AG04449 (cell line): ENCODE measurements at regions of chr16 and their contacts with region 1.

Region 1: GRCh38 chr16:87324411-87325275 is 7.5 kb upstream of the C16orf95 start:
- DNase-seq: no peak
- H3K4me3 ChIP-seq: no peak overlapping the region
- CTCF ChIP-seq: peak; percentile 81

Region 2: GRCh38 chr16:86874141-86874540 is 450.5 kb before region 1 on chr16:
- CTCF ChIA-PET with region 1: no interaction called
- POLR2A ChIA-PET with region 1: no interaction called
- DNase-seq: no peak
- H3K4me3 ChIP-seq: no peak overlapping the region
- CTCF ChIP-seq: peak; percentile 34

Region 3: DNA sequence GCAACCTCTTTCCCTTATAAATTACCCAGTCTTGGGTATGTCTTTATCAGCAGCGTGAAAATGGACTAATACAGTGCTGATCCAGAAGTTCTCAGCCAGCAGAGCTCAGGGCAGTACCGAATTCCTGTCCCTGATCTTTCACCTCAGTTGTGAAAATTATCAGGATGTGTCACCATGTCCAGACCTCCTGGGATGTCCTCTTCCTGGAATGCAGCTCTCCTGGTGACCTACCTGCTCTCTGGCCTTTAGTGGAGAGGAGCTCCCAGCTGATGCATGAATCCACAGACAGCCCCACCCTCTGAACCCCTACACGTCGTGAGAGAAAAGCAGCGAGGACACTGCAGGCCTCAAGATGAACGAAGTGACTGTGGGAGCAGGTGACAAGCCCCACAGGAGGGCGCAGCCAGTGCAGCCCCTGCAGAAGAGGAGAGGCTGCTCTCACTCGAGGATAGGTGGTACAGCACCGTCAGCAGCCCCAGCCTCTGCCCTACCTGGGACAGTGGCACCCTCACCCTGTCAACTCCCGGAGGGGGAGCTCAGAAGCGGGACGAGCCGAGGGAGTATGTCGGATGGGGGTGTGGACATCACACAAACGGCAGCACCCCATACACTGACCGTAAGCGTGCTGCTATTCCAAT is 14.6 kb after region 1 on chr16:
- CTCF ChIA-PET with region 1: interaction called, 29 read pairs
- POLR2A ChIA-PET with region 1: no interaction called
- DNase-seq: no peak
- H3K4me3 ChIP-seq: no peak overlapping the region
- CTCF ChIP-seq: no peak

Region 4: GRCh38 chr16:87344931-87345631 is 20.4 kb after region 1 on chr16:
- CTCF ChIA-PET with region 1: interaction called, 11 read pairs
- POLR2A ChIA-PET with region 1: no interaction called
- DNase-seq: no peak
- H3K4me3 ChIP-seq: no peak overlapping the region
- CTCF ChIP-seq: no peak